ENCODE measurements at regions of chr20 and their contacts with region 1.

Region 1: DNA sequence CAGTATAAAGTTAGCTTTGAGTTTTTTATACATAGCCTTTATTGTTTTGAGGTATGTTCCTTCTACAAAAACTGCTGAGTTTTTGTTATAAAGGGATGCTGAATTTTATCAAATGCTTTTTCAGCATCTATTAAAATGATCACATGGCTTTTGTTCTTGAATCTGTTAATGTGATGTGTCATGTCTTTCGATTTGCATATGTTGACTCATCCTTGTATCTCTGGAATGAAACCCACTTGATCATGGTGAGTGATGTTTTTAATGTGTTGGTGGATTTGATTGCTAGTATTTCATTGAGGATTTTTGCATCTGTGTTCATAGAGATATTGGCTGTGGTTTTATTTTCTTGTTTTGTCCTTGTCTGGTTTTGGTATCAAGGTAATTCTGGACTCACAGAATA is 24.7 kb upstream of the BLCAP start:
- DNase-seq: no peak
- ATAC-seq: no peak
- H3K4me3 ChIP-seq: no peak overlapping the region
- H3K4me3 Mint-ChIP-seq: no peak overlapping the region
- H3K27ac ChIP-seq: no peak overlapping the region
- H3K27ac Mint-ChIP-seq: no peak overlapping the region
- H3K4me1 ChIP-seq: no peaks in the 10 kb centered on the region
- H3K4me1 Mint-ChIP-seq: no peaks in the 10 kb centered on the region
- H3K27me3 ChIP-seq: peaks cover 0 to 15% of the 10 kb centered on the region in 2 experiments
- H3K27me3 Mint-ChIP-seq: peaks cover 19 to 29% of the 10 kb centered on the region in 2 donors

Region 2: GRCh38 chr20:38304845-38305447 is 752.5 kb after region 1 on chr20:
- CTCF ChIA-PET with region 1: interaction called in 1 of 2 experiments, 12 read pairs
- POLR2A ChIA-PET with region 1: no interaction called
- DNase-seq: peak in 4 of 35 experiments; percentile 6 to 22 (median 10)
- ATAC-seq: no peak
- H3K4me3 ChIP-seq: no peak overlapping the region
- H3K4me3 Mint-ChIP-seq: no peak overlapping the region
- H3K27ac ChIP-seq: no peak overlapping the region
- H3K27ac Mint-ChIP-seq: no peak overlapping the region
- H3K4me1 ChIP-seq: peaks cover 0 to 7% of the 10 kb centered on the region in 2 experiments
- H3K4me1 Mint-ChIP-seq: peaks cover 10 to 20% (median 15%) of the 10 kb centered on the region in 3 donors
- H3K27me3 ChIP-seq: peaks cover 0 to 60% of the 10 kb centered on the region in 2 experiments
- H3K27me3 Mint-ChIP-seq: peaks cover 54 to 62% of the 10 kb centered on the region in 2 donors